GM12878 (cell line): ENCODE measurements at regions of chr4 and their contacts with region 1.

Region 1: DNA sequence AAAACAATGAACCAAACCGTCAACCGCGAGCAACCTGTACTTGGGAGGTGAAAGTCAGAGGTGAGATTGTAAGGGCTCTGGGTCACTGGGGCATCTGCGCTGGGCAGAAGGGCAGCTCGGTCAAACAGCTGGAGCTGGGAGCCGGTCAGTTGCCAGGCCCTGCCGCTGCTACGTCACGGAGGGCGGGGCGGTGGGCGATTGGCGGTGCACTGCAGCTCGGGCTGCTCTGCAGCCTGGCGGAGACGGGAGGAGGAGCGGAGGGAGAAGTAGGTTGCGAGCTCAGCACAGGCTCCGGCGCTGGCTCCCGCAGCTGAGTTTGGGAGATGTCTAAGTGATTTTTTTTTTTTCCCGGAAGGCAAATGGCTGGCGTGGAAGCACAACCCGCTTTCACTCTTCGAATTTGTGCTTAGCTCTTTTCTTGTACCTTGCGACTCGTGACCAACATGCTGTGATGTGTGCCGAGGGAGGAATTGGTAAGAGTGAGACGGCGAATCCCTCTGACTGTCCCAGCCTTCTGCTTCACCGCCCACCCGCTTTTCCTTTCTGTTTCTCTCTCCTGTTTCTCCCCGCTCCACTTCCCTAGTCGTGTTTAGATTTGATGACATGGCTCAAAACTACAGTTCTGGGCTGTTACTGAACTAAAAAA is at the start of gene ATP10D:
- DNase-seq: peak; percentile 71
- ATAC-seq: peak; percentile 91
- H3K4me3 ChIP-seq: peak within 1 kb of the TSS; percentile 81
- H3K27ac ChIP-seq: peak within 1 kb of the TSS; percentile 70
- H3K4me1 ChIP-seq: peaks cover 17% of the 10 kb centered on the region
- H3K27me3 ChIP-seq: no peaks in the 10 kb centered on the region
- CTCF ChIP-seq: no peak; a peak in 1 of 6 replicates
- EP300 ChIP-seq: peak in 1 of 2 experiments; percentile 42; a peak in 1 of 4 replicates
- POLR2A ChIP-seq: peak; percentile 91
- RAD21 ChIP-seq: peak; percentile 34; the same call in 1 of the 2 replicates
- polyA plus RNA-seq, gene ATP10D: 10.2 to 18.0 TPM

Region 2: DNA sequence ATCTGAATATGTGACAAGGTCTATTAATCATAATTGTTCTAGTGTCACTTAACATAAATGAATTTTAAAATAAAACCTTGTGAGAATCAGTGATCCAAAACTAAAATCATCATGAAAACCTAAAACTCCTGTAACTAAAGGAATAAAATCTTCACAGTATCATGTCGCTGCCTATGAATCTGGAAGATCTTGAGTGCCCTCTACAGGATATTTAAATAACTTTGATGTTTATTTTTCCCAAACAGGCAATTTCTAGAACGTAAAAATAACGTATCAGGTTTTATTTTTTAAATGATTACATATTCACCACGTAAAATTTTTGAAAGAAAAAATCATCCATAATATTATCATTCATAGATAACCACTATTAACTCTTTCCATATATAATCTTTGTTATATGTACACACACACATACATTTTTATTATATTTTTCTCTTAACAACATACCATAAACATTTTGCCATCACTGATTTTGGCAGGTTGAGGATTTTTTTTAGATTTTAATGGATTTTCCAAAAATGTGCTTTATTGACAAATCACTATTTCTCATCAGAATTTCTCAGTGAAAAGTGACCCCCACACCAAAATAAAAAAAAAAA is 101.2 kb before region 1 on chr4:
- CTCF ChIA-PET with region 1: interaction called, 7 read pairs
- POLR2A ChIA-PET with region 1: no interaction called
- RAD21 ChIA-PET with region 1: interaction called, 12 read pairs
- SMC1A ChIA-PET with region 1: interaction called, 9 read pairs
- in situ Hi-C with region 1: no loop called
- intact Hi-C with region 1: no loop called
- DNase-seq: no peak
- ATAC-seq: peak; percentile 44; the same call in 2 of the 3 replicates
- H3K4me3 ChIP-seq: no peak overlapping the region
- H3K27ac ChIP-seq: no peak overlapping the region
- H3K4me1 ChIP-seq: no peaks in the 10 kb centered on the region
- H3K27me3 ChIP-seq: no peaks in the 10 kb centered on the region
- CTCF ChIP-seq: peak; percentile 19 to 59 (median 37); a peak in 4 of 6 replicates
- EP300 ChIP-seq: no peak
- POLR2A ChIP-seq: no peak
- RAD21 ChIP-seq: peak; percentile 83

Region 3: DNA sequence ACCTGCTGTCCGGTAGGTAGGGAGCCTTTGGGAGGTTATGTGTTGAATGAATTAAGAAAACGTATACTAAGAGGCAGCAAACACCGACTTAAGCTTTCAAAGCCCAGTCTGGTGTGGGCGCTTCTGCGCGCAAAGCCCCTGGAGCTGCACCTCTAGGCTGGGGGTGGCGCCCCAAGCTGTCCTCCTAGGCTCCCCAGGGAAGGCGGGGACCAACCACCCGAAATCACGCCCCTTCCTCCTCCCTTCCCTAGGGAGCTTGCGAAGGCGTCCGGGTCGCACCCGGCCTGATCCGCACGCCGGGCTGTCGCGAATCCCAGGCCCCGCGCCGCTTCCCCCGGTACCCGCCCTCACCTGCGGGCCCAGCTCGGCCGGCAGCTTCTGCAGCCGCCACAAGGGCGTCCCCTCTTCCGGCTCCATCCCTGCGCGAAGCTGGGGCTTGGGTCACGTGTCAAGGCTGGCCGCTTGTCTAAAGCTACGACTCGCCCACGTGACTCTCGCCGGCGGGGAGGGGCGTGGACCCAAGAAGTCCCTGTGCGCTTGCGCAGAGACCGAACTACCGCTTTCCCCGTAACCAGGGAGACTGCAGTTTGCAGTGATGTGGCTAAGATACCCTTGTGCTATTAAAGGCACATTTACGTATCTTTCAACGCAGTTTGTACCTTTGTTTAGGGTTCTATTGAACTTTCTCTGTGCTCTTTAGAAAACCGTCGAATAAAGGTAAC is 21.8 kb before region 1 on chr4 and contains the start of gene COMMD8:
- CTCF ChIA-PET with region 1: interaction called, 79 read pairs
- POLR2A ChIA-PET with region 1: interaction called, 36 read pairs
- RAD21 ChIA-PET with region 1: interaction called, 84 read pairs
- SMC1A ChIA-PET with region 1: interaction called, 126 read pairs
- in situ Hi-C with region 1: no loop called
- intact Hi-C with region 1: loop called (anchors 1 kb)
- DNase-seq: peak; percentile 91
- ATAC-seq: peak; percentile 87
- H3K4me3 ChIP-seq: peak within 1 kb of the TSS; percentile 92
- H3K27ac ChIP-seq: peak within 1 kb of the TSS; percentile 79
- H3K4me1 ChIP-seq: peaks cover 22% of the 10 kb centered on the region
- H3K27me3 ChIP-seq: no peaks in the 10 kb centered on the region
- CTCF ChIP-seq: peak; percentile 22 to 41 (median 34); a peak in 5 of 6 replicates
- EP300 ChIP-seq: peak in 1 of 2 experiments; percentile 25; a peak in 1 of 4 replicates
- POLR2A ChIP-seq: peak; percentile 96
- RAD21 ChIP-seq: peak; percentile 1; the same call in 1 of the 2 replicates
- polyA plus RNA-seq, gene COMMD8: 126 to 152 TPM

Region 4: DNA sequence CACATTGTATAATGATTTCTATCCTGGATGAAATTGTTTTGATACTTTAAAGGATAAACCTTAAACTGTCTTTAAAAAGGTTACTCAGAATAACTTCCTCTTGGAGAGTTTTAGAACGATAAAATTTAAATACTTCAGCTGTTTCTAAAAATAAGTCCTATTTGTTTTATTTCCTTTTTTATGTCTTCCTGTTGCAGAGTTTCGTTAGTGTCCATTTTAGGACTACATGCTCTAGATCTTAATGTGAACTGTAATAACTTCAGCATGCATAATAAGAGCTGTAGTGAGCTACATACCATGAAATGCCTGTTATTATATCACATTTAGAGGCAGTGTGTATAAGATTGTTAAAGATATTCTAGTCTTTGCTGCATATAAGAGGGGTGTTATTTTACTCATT is 14.5 kb after region 1 on chr4:
- CTCF ChIA-PET with region 1: interaction called, 30 read pairs
- POLR2A ChIA-PET with region 1: interaction called, 22 read pairs
- RAD21 ChIA-PET with region 1: interaction called, 50 read pairs
- SMC1A ChIA-PET with region 1: interaction called, 49 read pairs
- in situ Hi-C with region 1: no loop called
- intact Hi-C with region 1: no loop called
- DNase-seq: no peak
- ATAC-seq: peak; percentile 61
- H3K4me3 ChIP-seq: peak overlapping the region; percentile 26; the same call in 1 of the 2 replicates
- H3K27ac ChIP-seq: peak overlapping the region; percentile 80
- H3K4me1 ChIP-seq: peaks cover 25% of the 10 kb centered on the region
- H3K27me3 ChIP-seq: no peaks in the 10 kb centered on the region
- CTCF ChIP-seq: no peak
- EP300 ChIP-seq: no peak
- POLR2A ChIP-seq: no peak
- RAD21 ChIP-seq: no peak

Region 5: DNA sequence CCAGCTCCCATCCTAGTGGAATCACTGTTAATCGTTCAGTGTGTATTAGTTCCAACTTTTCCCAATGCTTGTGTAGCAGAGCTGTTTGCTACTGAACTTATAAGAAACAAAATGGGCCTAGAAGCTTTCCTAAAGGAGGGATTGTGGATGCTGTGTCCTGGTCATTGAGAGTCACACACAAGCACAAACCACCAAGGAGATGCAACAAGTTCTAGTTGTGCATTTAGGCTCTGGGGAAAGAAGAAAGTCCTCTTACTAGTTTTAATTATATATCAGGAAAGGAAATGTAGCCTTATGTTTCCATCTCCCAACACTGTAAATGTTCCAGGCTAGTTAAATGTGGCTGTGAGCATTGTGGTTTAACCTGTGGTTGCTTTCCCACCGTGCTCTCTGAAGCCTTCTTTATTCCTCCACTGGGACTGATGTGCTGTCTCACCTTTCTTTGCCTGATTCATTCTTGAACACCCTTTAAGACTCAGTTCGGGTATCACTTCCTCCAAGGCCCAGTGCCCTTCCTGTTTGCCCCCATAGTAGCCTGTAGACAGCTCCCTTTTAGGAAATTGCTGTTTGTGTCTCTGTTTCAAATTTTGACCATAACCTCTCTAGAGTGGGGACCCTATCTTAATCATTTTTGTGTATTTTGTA is 34.2 kb after region 1 on chr4:
- CTCF ChIA-PET with region 1: interaction called, 7 read pairs
- POLR2A ChIA-PET with region 1: interaction called, 13 read pairs
- RAD21 ChIA-PET with region 1: interaction called, 11 read pairs
- SMC1A ChIA-PET with region 1: interaction called, 12 read pairs
- in situ Hi-C with region 1: no loop called
- intact Hi-C with region 1: loop called (anchors 2 kb)
- DNase-seq: peak; percentile 81
- ATAC-seq: peak; percentile 99
- H3K4me3 ChIP-seq: no peak overlapping the region; the same call in 1 of the 2 replicates
- H3K27ac ChIP-seq: peak overlapping the region; percentile 77
- H3K4me1 ChIP-seq: peaks cover 17% of the 10 kb centered on the region
- H3K27me3 ChIP-seq: no peaks in the 10 kb centered on the region
- CTCF ChIP-seq: no peak
- EP300 ChIP-seq: peak in 1 of 2 experiments; percentile 87; a peak in 2 of 4 replicates
- POLR2A ChIP-seq: no peak
- RAD21 ChIP-seq: no peak; the same call in 1 of the 2 replicates

Region 6: DNA sequence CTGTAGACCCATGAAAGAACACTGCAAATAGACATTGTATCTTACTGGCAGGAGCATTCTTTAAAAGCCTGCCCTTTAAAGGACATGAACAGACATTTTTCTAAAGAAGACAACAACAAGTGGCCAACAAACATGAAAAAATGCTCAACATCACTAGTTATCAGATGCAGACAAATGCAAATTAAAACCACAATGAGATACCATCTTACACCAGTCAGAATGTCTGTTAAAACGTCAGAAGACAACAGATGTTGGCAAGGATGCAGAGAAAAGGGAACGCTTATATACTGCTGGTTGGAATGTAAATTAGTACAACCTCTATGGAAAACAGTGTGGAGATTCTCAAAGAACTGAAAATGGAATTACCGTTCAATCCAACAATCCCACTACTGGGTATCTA is 77.1 kb after region 1 on chr4:
- CTCF ChIA-PET with region 1: interaction called, 26 read pairs
- POLR2A ChIA-PET with region 1: interaction called, 6 read pairs
- RAD21 ChIA-PET with region 1: interaction called, 24 read pairs
- SMC1A ChIA-PET with region 1: interaction called, 7 read pairs
- in situ Hi-C with region 1: no loop called
- intact Hi-C with region 1: loop called (anchors 1 kb)
- DNase-seq: no peak
- ATAC-seq: no peak
- H3K4me3 ChIP-seq: no peak overlapping the region
- H3K27ac ChIP-seq: no peak overlapping the region
- H3K4me1 ChIP-seq: peaks cover 5% of the 10 kb centered on the region; the same call in 1 of the 2 replicates
- H3K27me3 ChIP-seq: no peaks in the 10 kb centered on the region; a peak in 1 of 4 replicates
- CTCF ChIP-seq: no peak
- EP300 ChIP-seq: no peak
- POLR2A ChIP-seq: no peak
- RAD21 ChIP-seq: no peak

Region 7: GRCh38 chr4:47617607-47618006 is 132.4 kb after region 1 on chr4:
- CTCF ChIA-PET with region 1: no interaction called
- POLR2A ChIA-PET with region 1: no interaction called
- RAD21 ChIA-PET with region 1: no interaction called
- SMC1A ChIA-PET with region 1: no interaction called
- in situ Hi-C with region 1: no loop called
- intact Hi-C with region 1: no loop called
- DNase-seq: peak; percentile 7
- ATAC-seq: peak; percentile 92
- H3K4me3 ChIP-seq: no peak overlapping the region
- H3K27ac ChIP-seq: no peak overlapping the region
- H3K4me1 ChIP-seq: no peaks in the 10 kb centered on the region
- H3K27me3 ChIP-seq: no peaks in the 10 kb centered on the region
- CTCF ChIP-seq: no peak
- EP300 ChIP-seq: 0 out of 4 replicates have a peak, but pooled peaks of 1 of the 2 experiments have one; percentile 18
- POLR2A ChIP-seq: no peak
- RAD21 ChIP-seq: no peak